H1 (cell line): ENCODE measurements at regions of chr11 and their contacts with region 1.

Region 1: GRCh38 chr11:86193297-86194095 is 51.1 kb upstream of the EED start:
- DNase-seq: peak; percentile 33 to 77
- H3K4me3 ChIP-seq: peak overlapping the region in 1 of 4 experiments; percentile 40; a peak in 1 of 8 replicates
- H3K27ac ChIP-seq: no peak overlapping the region
- H3K4me1 ChIP-seq: no peaks in the 10 kb centered on the region
- H3K27me3 ChIP-seq: no peaks in the 10 kb centered on the region; a peak in 1 of 7 replicates
- CTCF ChIP-seq: peak; percentile 17 to 81 (median 77)
- EP300 ChIP-seq: peak in 1 of 2 experiments; percentile 53; a peak in 1 of 3 replicates
- POLR2A ChIP-seq: no peak
- RAD21 ChIP-seq: peak; percentile 74 to 81

Region 2: GRCh38 chr11:86041975-86042378 is 151.5 kb before region 1 on chr11:
- CTCF ChIA-PET with region 1: interaction called, 26 read pairs
- POLR2A ChIA-PET with region 1: no interaction called
- DNase-seq: peak; percentile 44 to 62
- H3K4me3 ChIP-seq: no peak overlapping the region
- H3K27ac ChIP-seq: no peak overlapping the region
- H3K4me1 ChIP-seq: peaks cover 0 to 4% (median 0%) of the 10 kb centered on the region in 4 experiments; a peak in 1 of 7 replicates
- H3K27me3 ChIP-seq: no peaks in the 10 kb centered on the region
- CTCF ChIP-seq: peak in 2 of 3 experiments; percentile 71 to 77; a peak in 3 of 4 replicates
- EP300 ChIP-seq: no peak
- POLR2A ChIP-seq: no peak
- RAD21 ChIP-seq: peak; percentile 75 to 79

Region 3: GRCh38 chr11:86138958-86139357 is 54.5 kb before region 1 on chr11:
- CTCF ChIA-PET with region 1: no interaction called
- POLR2A ChIA-PET with region 1: no interaction called
- DNase-seq: no peak
- H3K4me3 ChIP-seq: no peak overlapping the region
- H3K27ac ChIP-seq: no peak overlapping the region
- H3K4me1 ChIP-seq: no peaks in the 10 kb centered on the region
- H3K27me3 ChIP-seq: no peaks in the 10 kb centered on the region
- CTCF ChIP-seq: no peak
- EP300 ChIP-seq: no peak
- POLR2A ChIP-seq: no peak
- RAD21 ChIP-seq: no peak

Region 4: DNA sequence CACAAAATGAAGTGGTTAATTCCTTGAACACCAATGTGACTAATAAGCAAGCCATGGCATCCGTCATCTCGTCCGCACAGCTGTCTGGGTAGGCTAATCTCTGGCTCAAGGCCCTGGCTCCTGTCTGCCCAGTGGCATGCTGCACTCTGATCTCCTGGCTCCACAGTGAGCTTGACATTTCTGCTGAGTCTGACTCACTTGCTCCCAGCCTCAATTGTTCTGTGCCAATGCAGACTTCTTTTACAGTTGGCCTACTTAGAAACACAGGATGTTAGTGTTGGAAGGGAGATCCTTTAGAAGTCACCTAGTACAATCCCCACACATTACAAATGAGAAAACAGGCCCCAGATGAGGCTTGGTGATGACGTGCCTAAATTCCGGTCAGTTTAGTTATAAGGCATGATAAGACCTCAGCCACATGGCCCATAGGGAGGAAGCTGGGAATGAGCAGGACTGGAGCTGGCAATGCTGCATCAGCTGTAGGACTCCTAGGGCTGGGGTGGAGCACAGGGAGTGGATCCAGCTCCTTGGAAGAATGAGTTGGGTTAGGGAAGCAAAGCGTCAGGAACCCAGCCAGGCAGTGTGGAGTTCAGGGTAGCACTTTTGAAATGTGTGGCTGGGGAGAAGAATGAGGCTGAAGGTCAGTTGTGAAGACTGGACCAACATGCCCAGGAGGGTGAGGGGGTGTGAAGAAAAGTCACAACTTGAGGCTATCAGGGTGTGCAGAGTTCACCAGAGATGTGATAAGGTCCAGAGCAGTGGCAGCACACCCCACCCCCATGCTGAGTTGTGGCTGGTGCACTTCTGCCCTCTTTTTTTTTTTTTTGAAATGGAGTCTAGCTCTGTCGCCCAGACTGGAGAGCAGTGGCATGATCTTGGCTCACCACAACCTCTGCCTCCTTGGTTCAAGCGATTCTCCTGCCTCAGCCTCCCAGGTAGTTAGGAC is 19.1 kb before region 1 on chr11:
- CTCF ChIA-PET with region 1: interaction called, 13 read pairs
- POLR2A ChIA-PET with region 1: interaction called, 4 read pairs
- DNase-seq: no peak
- H3K4me3 ChIP-seq: no peak overlapping the region
- H3K27ac ChIP-seq: no peak overlapping the region
- H3K4me1 ChIP-seq: no peaks in the 10 kb centered on the region
- H3K27me3 ChIP-seq: no peaks in the 10 kb centered on the region
- CTCF ChIP-seq: no peak
- EP300 ChIP-seq: no peak
- POLR2A ChIP-seq: no peak
- RAD21 ChIP-seq: no peak

Region 5: GRCh38 chr11:86182976-86183584 is 10.4 kb before region 1 on chr11:
- CTCF ChIA-PET with region 1: interaction called, 10 read pairs
- POLR2A ChIA-PET with region 1: no interaction called
- DNase-seq: no peak
- H3K4me3 ChIP-seq: no peak overlapping the region
- H3K27ac ChIP-seq: no peak overlapping the region
- H3K4me1 ChIP-seq: no peaks in the 10 kb centered on the region
- H3K27me3 ChIP-seq: no peaks in the 10 kb centered on the region
- CTCF ChIP-seq: no peak
- EP300 ChIP-seq: no peak
- POLR2A ChIP-seq: no peak
- RAD21 ChIP-seq: no peak

Region 6: DNA sequence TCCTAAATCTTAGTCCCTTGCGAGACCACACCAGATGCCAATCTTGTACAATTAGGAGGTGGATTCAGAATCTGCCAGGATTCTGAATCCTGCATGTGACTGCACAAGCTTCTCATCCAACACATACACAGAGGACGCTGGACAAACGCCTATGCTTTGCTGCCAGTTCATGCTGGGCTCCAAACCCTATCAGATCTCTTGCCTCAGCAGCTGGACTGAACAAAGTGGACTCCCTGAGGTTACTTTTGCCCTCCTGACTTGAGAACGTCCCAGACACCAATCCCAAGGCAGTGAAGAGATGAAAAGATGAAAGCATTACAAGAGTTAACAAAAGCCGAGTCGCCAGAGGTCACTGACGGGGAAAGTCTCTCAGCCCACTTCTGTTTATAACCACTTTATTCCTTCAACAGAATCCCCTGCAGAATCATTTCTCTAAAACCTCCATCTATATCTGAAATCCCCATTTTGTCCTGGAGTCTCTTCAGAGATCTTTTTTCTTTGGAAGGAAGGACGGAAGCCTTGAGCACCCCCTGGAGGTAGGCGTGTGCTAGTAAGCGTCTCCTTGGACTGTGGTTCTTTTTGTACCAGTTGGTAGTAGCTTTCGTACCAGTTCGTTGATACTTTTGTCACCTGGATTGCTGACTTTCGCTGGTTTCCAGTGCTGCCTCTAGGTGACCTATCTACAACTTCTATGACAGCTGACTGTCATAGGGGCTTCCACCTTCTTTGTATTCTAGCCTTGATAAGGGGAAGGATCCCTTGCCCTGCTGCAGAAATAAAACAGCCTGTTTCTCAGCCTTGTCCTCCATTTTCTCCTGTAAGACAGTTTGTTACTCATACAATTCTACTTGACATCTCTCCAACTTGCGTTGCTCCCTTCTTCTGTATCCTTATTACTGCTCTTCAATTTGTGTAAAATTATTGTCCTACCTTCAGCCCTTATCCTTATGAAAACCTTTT is 24.9 kb after region 1 on chr11:
- CTCF ChIA-PET with region 1: interaction called, 21 read pairs
- POLR2A ChIA-PET with region 1: no interaction called
- DNase-seq: peak; percentile 43 to 79
- H3K4me3 ChIP-seq: no peak overlapping the region; a peak in 1 of 8 replicates
- H3K27ac ChIP-seq: no peak overlapping the region
- H3K4me1 ChIP-seq: no peaks in the 10 kb centered on the region
- H3K27me3 ChIP-seq: no peaks in the 10 kb centered on the region
- CTCF ChIP-seq: peak; percentile 62 to 84 (median 81)
- EP300 ChIP-seq: no peak
- POLR2A ChIP-seq: no peak
- RAD21 ChIP-seq: peak; percentile 79 to 82